Panc1 (cell line): ENCODE measurements at regions of chr19 and their contacts with region 1.

Region 1: GRCh38 chr19:57664269-57665127 is 4.2 kb upstream of the ZSCAN4 start:
- DNase-seq: no peak
- ATAC-seq: peak; percentile 94
- H3K4me3 ChIP-seq: peak overlapping the region; percentile 55 to 74
- H3K27ac ChIP-seq: no peak overlapping the region; the same call in none of the 2 replicates
- H3K4me1 ChIP-seq: peaks cover 3% of the 10 kb centered on the region
- H3K27me3 ChIP-seq: peaks cover 17% of the 10 kb centered on the region
- CTCF ChIP-seq: no peak

Region 2: DNA sequence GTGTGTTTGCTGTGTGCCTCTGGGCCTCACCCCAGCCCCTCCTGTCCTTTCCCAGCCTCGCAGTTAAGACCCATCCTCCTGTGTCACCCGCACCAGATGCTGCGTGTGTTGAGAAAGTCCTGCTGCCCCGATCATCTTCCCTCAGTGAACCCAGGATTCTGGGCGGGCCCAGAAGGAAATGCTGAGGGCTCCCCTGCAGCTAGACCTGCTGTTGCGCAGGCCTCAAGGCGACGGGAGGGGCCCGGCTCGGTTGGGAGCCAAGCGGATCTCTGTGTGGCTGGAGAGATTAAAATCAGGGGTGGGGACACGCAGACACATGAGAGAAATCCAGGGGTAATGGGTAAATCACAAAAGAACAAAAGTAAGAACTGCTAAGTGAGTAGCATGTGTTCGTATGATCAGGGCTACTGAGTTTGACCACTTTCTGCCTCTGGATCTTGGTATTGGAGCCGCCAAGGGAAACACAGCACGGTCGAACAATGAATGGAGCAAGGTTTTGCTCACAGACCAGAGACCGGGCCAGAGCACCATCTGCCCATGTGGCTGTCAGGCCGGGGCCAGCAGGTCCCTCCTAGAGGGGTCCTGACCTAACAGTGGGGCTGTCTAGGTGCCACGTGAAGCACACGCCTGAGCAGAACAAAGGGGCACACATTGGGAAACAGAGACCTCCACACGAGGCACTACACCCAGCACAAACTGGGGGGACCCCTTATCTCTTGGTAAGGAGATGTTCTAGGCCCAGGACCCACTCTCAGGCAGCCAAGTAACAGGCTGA is 376.4 kb after region 1 on chr19:
- CTCF ChIA-PET with region 1: interaction called, 15 read pairs
- POLR2A ChIA-PET with region 1: no interaction called
- in situ Hi-C with region 1: no loop called
- intact Hi-C with region 1: no loop called
- DNase-seq: no peak
- ATAC-seq: no peak
- H3K4me3 ChIP-seq: no peak overlapping the region
- H3K27ac ChIP-seq: no peak overlapping the region
- H3K4me1 ChIP-seq: no peaks in the 10 kb centered on the region
- H3K27me3 ChIP-seq: no peaks in the 10 kb centered on the region
- CTCF ChIP-seq: no peak